ENCODE measurements at regions of chr10 and their contacts with region 1.

Region 1: GRCh38 chr10:28676968-28677887 is at the start of gene BAMBI:
- DNase-seq: peak; percentile 98
- H3K4me3 ChIP-seq: peak within 1 kb of the TSS; percentile 87
- H3K27ac ChIP-seq: peak within 1 kb of the TSS; percentile 87
- H3K4me1 ChIP-seq: peaks cover 18% of the 10 kb centered on the region
- H3K27me3 ChIP-seq: no peaks in the 10 kb centered on the region
- CTCF ChIP-seq: peak; percentile 58
- total RNA-seq, gene BAMBI: 24.8 and 31.9 TPM in 2 replicates

Region 2: GRCh38 chr10:27713927-27714326 is 963.3 kb before region 1 on chr10:
- CTCF ChIA-PET with region 1: no interaction called
- POLR2A ChIA-PET with region 1: no interaction called
- intact Hi-C with region 1: no loop called
- DNase-seq: peak; percentile 15
- H3K4me3 ChIP-seq: no peak overlapping the region
- H3K27ac ChIP-seq: no peak overlapping the region
- H3K4me1 ChIP-seq: no peaks in the 10 kb centered on the region
- H3K27me3 ChIP-seq: no peaks in the 10 kb centered on the region
- CTCF ChIP-seq: no peak

Region 3: DNA sequence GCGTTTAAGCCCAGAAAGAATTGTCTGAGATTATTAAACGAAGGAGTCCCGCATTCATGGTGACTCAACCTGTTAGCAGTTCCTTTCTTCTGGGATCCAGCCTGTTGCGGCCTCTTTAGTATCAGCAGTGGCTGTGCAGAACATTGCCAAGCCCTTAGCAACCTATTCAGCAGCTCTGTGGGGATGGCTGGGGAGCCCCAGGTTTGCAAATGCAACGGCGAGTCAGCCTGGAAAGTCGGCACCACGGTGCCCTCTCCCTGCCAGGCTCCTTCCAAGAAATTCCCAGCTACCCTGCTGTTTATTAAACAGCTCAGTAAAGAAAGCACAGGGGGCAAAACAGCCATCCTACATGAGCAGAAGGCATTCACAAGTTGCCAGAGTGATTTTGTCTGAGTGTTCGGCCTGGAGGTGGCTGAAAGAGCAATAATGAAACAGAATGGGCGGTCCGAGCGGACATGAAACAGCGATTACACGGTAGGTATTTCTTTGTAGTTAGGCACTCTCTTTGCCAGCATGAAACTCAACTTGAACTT is 198.4 kb after region 1 on chr10:
- CTCF ChIA-PET with region 1: no interaction called
- POLR2A ChIA-PET with region 1: no interaction called
- intact Hi-C with region 1: loop called (anchors 5 kb)
- DNase-seq: peak; percentile 44
- H3K4me3 ChIP-seq: no peak overlapping the region
- H3K27ac ChIP-seq: no peak overlapping the region
- H3K4me1 ChIP-seq: peaks cover 14% of the 10 kb centered on the region
- H3K27me3 ChIP-seq: no peaks in the 10 kb centered on the region
- CTCF ChIP-seq: no peak

Region 4: DNA sequence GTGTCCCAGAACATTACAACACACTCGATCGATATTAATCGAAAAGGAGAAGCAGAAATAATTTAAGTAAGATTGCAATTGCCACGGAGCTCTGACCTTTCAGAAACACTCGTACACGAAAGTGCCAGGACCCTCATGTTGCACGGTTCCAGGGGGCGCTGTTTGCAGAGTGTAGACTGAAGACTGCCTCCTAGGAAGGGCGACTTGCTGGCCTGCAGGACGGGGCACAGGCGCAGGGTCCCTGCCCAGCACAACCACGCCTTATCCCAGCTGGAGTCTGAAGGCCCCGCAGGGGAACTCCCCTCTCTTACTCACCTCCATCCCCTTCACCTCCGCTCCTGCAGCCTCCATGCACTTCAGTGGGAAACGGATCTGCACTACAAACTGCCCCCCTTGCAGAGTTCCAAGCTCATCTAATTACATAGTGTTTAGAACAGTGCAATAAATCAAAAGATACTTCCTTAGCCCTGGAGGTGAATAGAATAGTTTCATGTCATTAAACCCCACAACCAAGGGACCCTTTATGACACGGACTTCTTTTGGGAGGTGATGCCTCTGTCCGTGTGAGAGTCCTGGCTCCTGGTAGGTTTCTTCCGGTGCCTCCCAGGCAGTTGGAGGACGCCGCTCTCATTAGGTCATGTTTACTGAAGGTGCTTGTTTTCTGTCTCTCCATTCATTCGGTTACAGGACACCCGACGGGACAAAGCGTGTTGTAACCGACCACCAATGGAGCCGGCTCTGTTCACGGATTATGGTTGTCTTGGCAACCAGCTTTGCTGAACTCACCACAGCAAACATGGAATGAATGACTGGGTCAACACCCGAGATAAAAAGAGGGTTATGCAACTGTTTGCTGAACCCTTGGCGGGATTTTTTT is 262.3 kb after region 1 on chr10:
- CTCF ChIA-PET with region 1: no interaction called
- POLR2A ChIA-PET with region 1: no interaction called
- intact Hi-C with region 1: loop called (anchors 5 kb)
- DNase-seq: peak; percentile 95
- H3K4me3 ChIP-seq: peak overlapping the region; percentile 45
- H3K27ac ChIP-seq: peak overlapping the region; percentile 74
- H3K4me1 ChIP-seq: peaks cover 36% of the 10 kb centered on the region
- H3K27me3 ChIP-seq: no peaks in the 10 kb centered on the region
- CTCF ChIP-seq: peak; percentile 90

Region 5: DNA sequence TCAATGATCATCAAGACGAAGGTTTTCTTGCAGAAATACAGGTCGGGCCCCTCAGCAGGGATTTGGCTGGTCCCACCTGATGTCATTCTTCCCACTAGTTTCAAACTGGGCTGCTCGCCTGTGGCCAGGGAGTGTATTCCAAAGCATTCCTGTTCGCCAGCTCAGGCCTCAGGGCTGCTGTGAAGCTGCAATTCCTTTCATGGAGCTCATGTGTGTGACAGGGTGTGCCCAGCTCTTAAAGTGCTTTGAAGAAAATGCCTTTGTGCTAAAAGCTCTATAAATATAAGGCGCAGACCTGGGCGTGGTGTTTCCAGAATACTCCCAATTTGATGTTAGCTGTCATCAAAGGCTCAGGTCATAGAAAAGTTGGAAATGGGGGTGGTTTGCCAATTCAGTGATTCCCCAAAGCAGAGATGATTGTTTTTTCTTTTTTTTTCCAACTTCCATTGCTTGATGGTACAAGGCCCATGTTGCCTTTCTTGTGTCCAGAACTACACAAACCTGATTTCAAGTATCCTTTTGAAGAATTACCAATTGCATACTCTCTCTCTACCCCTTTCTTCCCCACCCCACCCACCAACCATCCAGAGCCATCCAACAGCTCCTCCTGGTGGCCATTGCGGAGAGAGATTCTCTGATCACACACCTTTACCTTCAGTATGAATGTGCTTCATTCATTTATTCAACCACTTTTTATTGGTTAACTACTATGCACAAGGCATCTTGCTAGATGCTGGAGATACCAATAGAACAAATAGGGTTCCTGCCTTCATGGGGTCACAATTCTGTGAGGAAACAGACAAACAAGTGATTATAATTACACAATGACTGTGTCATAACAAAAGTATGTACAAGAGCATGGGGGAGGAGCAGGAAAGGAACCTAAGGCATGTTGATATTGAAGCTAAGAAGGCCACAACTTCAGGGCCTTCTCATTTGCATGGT is 314.4 kb after region 1 on chr10:
- CTCF ChIA-PET with region 1: interaction called, 3 read pairs
- POLR2A ChIA-PET with region 1: no interaction called
- intact Hi-C with region 1: loop called (anchors 2 kb)
- DNase-seq: peak; percentile 75
- H3K4me3 ChIP-seq: no peak overlapping the region
- H3K27ac ChIP-seq: no peak overlapping the region
- H3K4me1 ChIP-seq: no peaks in the 10 kb centered on the region
- H3K27me3 ChIP-seq: no peaks in the 10 kb centered on the region
- CTCF ChIP-seq: peak; percentile 91

Region 6: DNA sequence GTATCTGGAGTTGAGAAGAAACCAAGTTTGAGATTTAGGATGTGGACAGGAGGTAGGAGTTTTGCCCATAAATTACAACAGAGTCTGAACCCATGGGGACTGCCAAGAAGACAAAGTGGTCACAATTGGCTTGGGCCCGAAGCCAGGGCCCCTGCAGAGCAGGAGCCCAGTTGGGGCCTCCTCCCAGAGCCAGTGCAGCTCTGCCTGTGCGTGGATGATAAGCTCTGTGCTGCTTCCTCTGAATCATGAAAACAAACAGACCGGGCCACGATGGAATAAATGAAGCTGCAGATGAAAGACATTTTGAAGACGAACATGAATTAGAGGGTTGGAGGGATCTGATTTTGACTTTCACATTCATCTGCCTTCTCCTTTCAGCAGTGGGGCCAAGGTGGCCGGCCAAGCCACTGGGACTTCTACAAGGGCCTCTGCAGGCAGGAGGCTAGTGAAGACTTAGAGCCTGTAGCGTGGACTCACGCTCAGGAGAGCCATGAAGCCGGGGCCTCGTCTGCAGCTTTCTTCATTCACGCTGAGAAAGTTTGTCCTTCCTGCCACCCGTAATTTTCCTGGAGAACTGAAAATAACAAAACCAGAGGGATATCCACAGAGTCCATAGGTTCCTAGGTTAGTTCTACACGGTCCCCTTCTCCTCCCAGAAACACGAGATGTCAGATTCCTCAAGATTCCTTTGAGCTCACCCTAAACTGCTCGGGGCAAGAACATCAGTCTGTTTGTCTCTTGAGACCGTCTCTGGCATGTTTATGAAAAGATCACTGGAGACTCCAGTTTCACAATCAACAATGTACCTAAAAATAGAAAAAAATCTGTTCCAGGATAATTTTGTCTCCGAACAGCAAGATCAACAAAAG is 455.0 kb after region 1 on chr10:
- CTCF ChIA-PET with region 1: no interaction called
- POLR2A ChIA-PET with region 1: no interaction called
- intact Hi-C with region 1: loop called (anchors 5 kb)
- DNase-seq: peak; percentile 90
- H3K4me3 ChIP-seq: peak overlapping the region; percentile 4
- H3K27ac ChIP-seq: peak overlapping the region; percentile 38
- H3K4me1 ChIP-seq: peaks cover 35% of the 10 kb centered on the region
- H3K27me3 ChIP-seq: no peaks in the 10 kb centered on the region
- CTCF ChIP-seq: no peak

Measured in A673 (cell line).